A673 (cell line): ENCODE measurements at regions of chr15 and their contacts with region 1.

Region 1: DNA sequence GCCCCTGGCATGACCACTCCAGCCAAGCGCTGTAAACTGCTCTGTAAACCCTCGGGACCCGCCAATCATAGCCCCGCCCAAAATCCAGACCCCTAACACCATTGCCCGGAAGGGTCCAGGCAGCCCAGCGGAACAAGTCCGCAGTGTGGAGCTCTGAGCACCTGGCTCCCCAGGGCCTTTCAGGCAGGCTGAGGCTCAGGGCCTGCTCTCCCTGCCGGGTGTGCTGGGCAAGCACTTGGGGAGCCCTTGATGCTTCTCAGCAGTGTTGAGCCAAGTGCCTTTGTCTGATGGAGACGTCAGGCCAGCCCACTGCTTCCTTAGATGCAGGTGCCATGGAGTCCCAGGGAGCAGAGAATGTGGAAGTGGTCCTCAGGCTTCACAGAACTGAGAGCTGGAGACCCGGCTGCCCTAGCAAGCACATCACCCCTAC is 106.2 kb downstream of the TLE3 start:
- DNase-seq: no peak
- H3K4me3 ChIP-seq: no peak overlapping the region
- H3K27ac ChIP-seq: no peak overlapping the region
- H3K4me1 ChIP-seq: no peaks in the 10 kb centered on the region
- H3K27me3 ChIP-seq: no peaks in the 10 kb centered on the region
- CTCF ChIP-seq: no peak

Region 2: GRCh38 chr15:68783226-68784058 is 1208.1 kb before region 1 on chr15:
- CTCF ChIA-PET with region 1: no interaction called
- POLR2A ChIA-PET with region 1: interaction called, 10 read pairs
- intact Hi-C with region 1: no loop called
- DNase-seq: peak; percentile 27
- H3K4me3 ChIP-seq: no peak overlapping the region
- H3K27ac ChIP-seq: peak overlapping the region; percentile 45
- H3K4me1 ChIP-seq: peaks cover 10% of the 10 kb centered on the region
- H3K27me3 ChIP-seq: no peaks in the 10 kb centered on the region
- CTCF ChIP-seq: peak; percentile 67